ENCODE measurements at regions of chr19 and their contacts with region 1.

Region 1: GRCh38 chr19:42401365-42402303 is 11.5 kb upstream of the CNFN start:
- DNase-seq: peak; percentile 46 to 72 (median 64)
- ATAC-seq: peak; percentile 78
- H3K4me3 ChIP-seq: peak overlapping the region; percentile 62
- H3K4me3 Mint-ChIP-seq: peak overlapping the region; percentile 79 to 88 (median 84)
- H3K27ac ChIP-seq: peak overlapping the region; percentile 68
- H3K27ac Mint-ChIP-seq: peak overlapping the region; percentile 49 to 88 (median 81)
- H3K4me1 ChIP-seq: peaks cover 12 to 13% of the 10 kb centered on the region in 2 donors
- H3K4me1 Mint-ChIP-seq: peaks cover 25 to 51% (median 42%) of the 10 kb centered on the region in 7 donors
- H3K27me3 ChIP-seq: no peaks in the 10 kb centered on the region
- H3K27me3 Mint-ChIP-seq: no peaks in the 10 kb centered on the region

Region 2: GRCh38 chr19:42433503-42434260 is 32.0 kb after region 1 on chr19:
- CTCF ChIA-PET with region 1: interaction called, 4 read pairs
- POLR2A ChIA-PET with region 1: no interaction called
- intact Hi-C with region 1: loop called in 1 of 2 experiments (anchors 5 kb)
- DNase-seq: peak in 7 of 9 donors; percentile 41 to 62 (median 56)
- ATAC-seq: peak; percentile 64
- H3K4me3 ChIP-seq: no peak overlapping the region
- H3K4me3 Mint-ChIP-seq: no peak overlapping the region
- H3K27ac ChIP-seq: no peak overlapping the region
- H3K27ac Mint-ChIP-seq: peak overlapping the region in 1 of 9 donors; percentile 5
- H3K4me1 ChIP-seq: no peaks in the 10 kb centered on the region
- H3K4me1 Mint-ChIP-seq: peaks cover 4 to 10% (median 6%) of the 10 kb centered on the region in 7 donors
- H3K27me3 ChIP-seq: no peaks in the 10 kb centered on the region
- H3K27me3 Mint-ChIP-seq: peaks cover 0 to 4% (median 0%) of the 10 kb centered on the region in 5 donors

Measured in naive thymus-derived CD4-positive, alpha-beta T cell (primary cell).